ENCODE measurements at regions of chr11 and their contacts with region 1.

Region 1: DNA sequence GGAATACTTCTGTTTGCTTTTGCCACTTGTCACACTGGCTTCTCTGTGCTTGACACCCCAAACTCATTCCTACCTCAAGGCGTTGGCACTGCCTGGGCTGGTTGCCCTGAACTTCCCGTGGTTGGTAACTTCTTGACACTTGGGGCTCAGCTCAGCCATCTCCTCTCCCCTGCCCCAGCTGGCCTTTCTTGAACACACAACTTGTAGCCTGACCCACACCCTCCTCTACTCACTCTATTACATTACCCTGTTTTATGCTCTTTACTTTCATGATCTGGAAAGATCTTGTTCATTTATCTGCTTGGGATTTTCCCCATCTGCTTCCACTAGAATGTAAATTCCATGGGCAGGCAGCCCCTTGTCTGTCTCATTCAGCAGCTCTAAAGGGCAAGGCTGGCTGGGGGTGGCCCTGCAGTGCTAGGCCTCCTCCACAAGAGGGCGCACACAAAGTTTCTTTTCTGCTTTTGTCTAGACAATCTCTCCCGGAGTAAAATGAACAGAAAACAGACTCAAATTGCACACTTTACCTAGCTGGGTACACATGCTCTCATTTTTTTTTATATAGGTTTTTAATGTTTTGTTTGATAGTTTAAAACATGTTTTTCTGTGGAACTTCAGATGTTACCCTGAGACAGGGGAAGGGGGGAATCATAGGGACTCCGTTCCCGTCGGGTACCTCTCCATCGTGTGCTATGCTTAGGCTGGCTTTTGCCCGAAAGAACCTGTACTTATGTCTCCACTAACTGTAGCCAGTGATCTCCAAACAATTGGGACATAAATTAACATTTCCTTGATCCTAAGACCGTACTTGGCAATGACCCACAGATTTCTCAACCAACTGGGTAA is 16.4 kb upstream of the MRGPRX2 start:
- DNase-seq: peak; percentile 73
- ATAC-seq: peak; percentile 43

Region 2: GRCh38 chr11:19110280-19110679 is 33.3 kb after region 1 on chr11:
- intact Hi-C with region 1: loop called (anchors 5 kb)
- DNase-seq: no peak
- ATAC-seq: peak; percentile 78

Measured in Right ventricle myocardium inferior (tissue), 1 donor.